ENCODE measurements at regions of chr11 and their contacts with region 1.

Region 1: DNA sequence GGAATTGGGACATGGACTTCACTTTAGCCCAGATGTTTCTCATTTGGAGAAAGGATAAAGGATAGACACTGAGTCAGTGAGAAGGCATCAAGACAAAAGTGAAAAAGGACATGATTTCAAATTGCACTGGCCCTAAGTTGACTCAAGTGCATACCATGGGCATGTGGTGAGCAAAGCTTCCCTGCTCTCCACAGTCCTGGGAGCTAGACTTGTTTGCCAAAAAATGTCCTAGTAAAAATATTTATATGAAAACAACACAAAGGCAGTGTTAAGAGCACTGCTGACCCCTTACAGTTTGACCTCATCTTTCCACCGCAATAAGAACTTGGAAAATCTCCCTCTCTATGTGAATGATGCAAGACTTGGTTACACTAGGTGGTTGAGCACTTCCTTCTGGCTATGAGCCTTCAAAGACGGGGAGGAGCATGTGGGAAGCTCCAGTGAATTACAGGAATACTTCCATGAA is 46.5 kb upstream of the FIBIN start:
- DNase-seq: no peak
- H3K4me3 ChIP-seq: no peak overlapping the region
- H3K27ac ChIP-seq: no peak overlapping the region
- H3K27me3 ChIP-seq: no peaks in the 10 kb centered on the region
- CTCF ChIP-seq: no peak

Region 2: GRCh38 chr11:26931248-26931631 is 16.2 kb before region 1 on chr11:
- intact Hi-C with region 1: loop called in 1 of 2 experiments (anchors 2 kb)
- DNase-seq: peak in 3 of 10 donors; percentile 33 to 51 (median 41)
- H3K4me3 ChIP-seq: no peak overlapping the region
- H3K27ac ChIP-seq: peak overlapping the region in 1 of 59 donors; percentile 38
- H3K27me3 ChIP-seq: peaks cover 0 to 5% (median 0%) of the 10 kb centered on the region in 45 donors
- CTCF ChIP-seq: no peak